Ovary (tissue), 10 donors: ENCODE measurements at regions of chr9 and their contacts with region 1.

Region 1: GRCh38 chr9:72280913-72281500 is 84.0 kb downstream of the ZFAND5 start:
- DNase-seq: peak; percentile 57 to 80 (median 75)
- H3K4me3 ChIP-seq: no peak overlapping the region
- H3K27ac ChIP-seq: no peak overlapping the region
- H3K4me1 ChIP-seq: no peaks in the 10 kb centered on the region
- H3K27me3 ChIP-seq: no peaks in the 10 kb centered on the region
- CTCF ChIP-seq: peak; percentile 59 to 82 (median 77)
- EP300 ChIP-seq: no peak
- POLR2A ChIP-seq: no peak

Region 2: GRCh38 chr9:72753266-72753893 is 472.4 kb after region 1 on chr9:
- intact Hi-C with region 1: loop called in 1 of 4 experiments (anchors 10 kb)
- DNase-seq: no peak
- H3K4me3 ChIP-seq: no peak overlapping the region
- H3K27ac ChIP-seq: no peak overlapping the region
- H3K4me1 ChIP-seq: no peaks in the 10 kb centered on the region
- H3K27me3 ChIP-seq: no peaks in the 10 kb centered on the region
- CTCF ChIP-seq: peak in 1 of 3 donors; percentile 20
- EP300 ChIP-seq: no peak
- POLR2A ChIP-seq: no peak

Region 3: DNA sequence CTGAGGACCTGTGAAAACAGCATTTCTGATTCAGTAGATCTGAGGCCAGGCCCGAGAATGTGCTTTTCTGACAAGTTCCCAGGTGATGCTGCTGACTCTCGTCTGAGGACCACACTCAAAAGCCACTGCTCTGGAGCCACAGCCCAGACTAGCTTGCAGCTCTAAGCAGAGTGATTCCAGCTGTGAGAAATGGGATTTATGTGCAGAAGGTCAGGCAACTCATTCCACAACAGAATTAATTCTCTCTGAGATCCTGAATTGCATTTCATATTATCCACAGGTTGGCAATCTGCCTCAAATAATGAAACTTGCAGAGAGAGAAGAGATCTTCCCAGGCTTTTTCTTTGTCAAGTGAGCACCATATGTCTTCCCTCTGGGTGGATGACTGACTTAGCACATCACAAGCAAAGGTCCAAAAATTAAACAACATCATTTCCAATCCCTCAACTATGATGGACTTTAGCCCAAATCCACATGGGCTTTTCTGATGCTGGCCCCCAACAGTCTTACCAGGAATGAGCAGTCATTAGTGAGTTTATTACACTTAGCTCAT is 531.6 kb after region 1 on chr9:
- intact Hi-C with region 1: loop called in 2 of 4 experiments (anchors 5 kb)
- DNase-seq: no peak
- H3K4me3 ChIP-seq: no peak overlapping the region
- H3K27ac ChIP-seq: no peak overlapping the region
- H3K4me1 ChIP-seq: no peaks in the 10 kb centered on the region
- H3K27me3 ChIP-seq: no peaks in the 10 kb centered on the region
- CTCF ChIP-seq: no peak
- EP300 ChIP-seq: no peak
- POLR2A ChIP-seq: no peak